H1 (cell line): ENCODE measurements at regions of chr11 and their contacts with region 1.

Region 1: GRCh38 chr11:72722050-72722748 is 30.0 kb downstream of the ARAP1 start:
- DNase-seq: peak in 1 of 2 experiments; percentile 86
- H3K4me3 ChIP-seq: no peak overlapping the region
- H3K27ac ChIP-seq: 0 out of 2 replicates have a peak overlapping the region, but pooled peaks have one; percentile 66
- H3K4me1 ChIP-seq: peaks cover 0 to 9% (median 5%) of the 10 kb centered on the region in 4 experiments; a peak in 3 of 7 replicates
- H3K27me3 ChIP-seq: no peaks in the 10 kb centered on the region
- CTCF ChIP-seq: no peak
- EP300 ChIP-seq: no peak
- POLR2A ChIP-seq: no peak
- RAD21 ChIP-seq: no peak

Region 2: GRCh38 chr11:72738199-72739141 is 16.3 kb after region 1 on chr11:
- CTCF ChIA-PET with region 1: interaction called, 18 read pairs
- POLR2A ChIA-PET with region 1: interaction called, 3 read pairs
- DNase-seq: no peak
- H3K4me3 ChIP-seq: no peak overlapping the region
- H3K27ac ChIP-seq: no peak overlapping the region
- H3K4me1 ChIP-seq: peaks cover 8 to 33% (median 22%) of the 10 kb centered on the region in 4 experiments
- H3K27me3 ChIP-seq: no peaks in the 10 kb centered on the region
- CTCF ChIP-seq: no peak
- EP300 ChIP-seq: no peak
- POLR2A ChIP-seq: no peak
- RAD21 ChIP-seq: no peak

Region 3: DNA sequence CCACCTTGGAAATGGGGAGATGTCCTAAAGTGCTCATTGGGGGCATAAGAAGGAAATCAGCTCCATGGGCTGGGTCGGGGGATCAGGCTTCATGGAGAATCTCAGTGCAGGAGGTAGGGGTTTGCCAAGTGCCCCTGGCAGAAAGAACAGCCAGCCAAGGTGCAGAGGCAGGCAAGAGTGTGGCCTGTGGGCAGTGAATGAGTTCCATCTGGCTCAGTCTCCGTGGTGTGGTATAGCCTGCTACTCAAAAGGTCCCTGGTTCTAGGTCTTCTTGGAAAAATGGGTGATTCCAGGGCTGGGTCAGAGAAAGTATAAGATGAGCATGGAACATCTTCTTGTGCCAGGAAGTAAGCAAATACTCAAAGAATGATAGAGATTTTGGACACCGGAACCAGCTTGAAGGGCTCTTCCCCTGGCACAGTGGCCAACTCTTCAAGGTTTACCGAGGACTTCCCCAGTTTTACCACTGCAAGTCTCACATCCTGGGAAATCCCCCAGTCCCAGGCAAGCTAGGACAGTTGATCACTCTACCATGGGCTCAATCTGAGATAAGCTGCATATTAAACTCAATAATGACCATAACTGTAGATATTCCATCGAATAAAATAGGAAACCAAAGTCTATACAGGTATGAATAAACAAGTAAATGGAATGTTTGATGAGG is 40.6 kb after region 1 on chr11:
- CTCF ChIA-PET with region 1: interaction called, 20 read pairs
- POLR2A ChIA-PET with region 1: interaction called, 4 read pairs
- DNase-seq: no peak
- H3K4me3 ChIP-seq: no peak overlapping the region
- H3K27ac ChIP-seq: no peak overlapping the region
- H3K4me1 ChIP-seq: peaks cover 0 to 14% (median 8%) of the 10 kb centered on the region in 4 experiments; a peak in 6 of 7 replicates
- H3K27me3 ChIP-seq: no peaks in the 10 kb centered on the region
- CTCF ChIP-seq: no peak
- EP300 ChIP-seq: no peak
- POLR2A ChIP-seq: no peak
- RAD21 ChIP-seq: no peak

Region 4: GRCh38 chr11:72781313-72782050 is 59.3 kb after region 1 on chr11:
- CTCF ChIA-PET with region 1: interaction called, 14 read pairs
- POLR2A ChIA-PET with region 1: no interaction called
- DNase-seq: peak in 1 of 2 experiments; percentile 63
- H3K4me3 ChIP-seq: peak overlapping the region; percentile 42 to 76 (median 57)
- H3K27ac ChIP-seq: no peak overlapping the region
- H3K4me1 ChIP-seq: peaks cover 5 to 19% (median 13%) of the 10 kb centered on the region in 4 experiments
- H3K27me3 ChIP-seq: peaks cover 0 to 12% (median 6%) of the 10 kb centered on the region in 4 experiments; a peak in 3 of 7 replicates
- CTCF ChIP-seq: no peak
- EP300 ChIP-seq: no peak
- POLR2A ChIP-seq: no peak
- RAD21 ChIP-seq: no peak

Region 5: GRCh38 chr11:72793425-72794367 is 71.5 kb after region 1 on chr11 and contains the start of gene STARD10:
- CTCF ChIA-PET with region 1: interaction called, 105 read pairs
- POLR2A ChIA-PET with region 1: interaction called, 3 read pairs
- DNase-seq: peak; percentile 83 to 93
- H3K4me3 ChIP-seq: peak within 1 kb of the TSS; percentile 46 to 93 (median 88)
- H3K27ac ChIP-seq: peak within 1 kb of the TSS; percentile 74; the same call in 1 of the 2 replicates
- H3K4me1 ChIP-seq: peaks cover 0 to 13% (median 7%) of the 10 kb centered on the region in 4 experiments; a peak in 4 of 7 replicates
- H3K27me3 ChIP-seq: no peaks in the 10 kb centered on the region
- CTCF ChIP-seq: peak; percentile 66 to 84 (median 76)
- EP300 ChIP-seq: no peak
- POLR2A ChIP-seq: peak in 1 of 2 experiments; percentile 60; a peak in 2 of 3 replicates
- RAD21 ChIP-seq: peak; percentile 51 to 60; a peak in 3 of 4 replicates
- total RNA-seq, gene STARD10: 23.7 and 25.3 TPM in 2 replicates